ENCODE measurements at regions of chr16 and their contacts with region 1.

Region 1: DNA sequence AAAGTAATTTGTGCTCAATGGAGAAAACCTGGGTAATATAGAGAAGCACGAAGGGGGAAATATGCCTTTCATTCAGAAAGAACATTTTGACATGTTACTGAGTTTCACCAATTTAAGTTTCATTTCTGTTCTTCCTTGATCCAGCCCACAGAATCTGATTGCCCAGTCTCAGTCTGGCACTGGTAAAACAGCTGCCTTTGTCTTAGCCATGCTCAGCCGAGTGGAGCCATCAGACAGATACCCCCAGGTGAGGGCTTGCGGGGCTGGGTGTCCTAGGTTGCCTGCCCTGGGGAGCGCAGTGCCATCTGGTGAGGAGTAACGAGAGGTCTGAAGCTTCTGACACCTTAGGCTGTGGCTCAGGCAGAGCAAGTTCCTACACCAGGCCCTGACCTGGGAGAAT is 17.7 kb downstream of the DDX19A start:
- DNase-seq: no peak
- H3K4me3 ChIP-seq: no peak overlapping the region
- H3K27ac ChIP-seq: no peak overlapping the region
- H3K4me1 ChIP-seq: no peaks in the 10 kb centered on the region
- H3K27me3 ChIP-seq: no peaks in the 10 kb centered on the region
- CTCF ChIP-seq: no peak
- EP300 ChIP-seq: no peak
- POLR2A ChIP-seq: no peak

Region 2: GRCh38 chr16:70529051-70529777 is 164.8 kb after region 1 on chr16:
- in situ Hi-C with region 1: loop called in 1 of 4 experiments (anchors 25 kb)
- intact Hi-C with region 1: no loop called
- DNase-seq: no peak
- H3K4me3 ChIP-seq: no peak overlapping the region
- H3K27ac ChIP-seq: no peak overlapping the region
- H3K4me1 ChIP-seq: peaks cover 8 to 40% (median 25%) of the 10 kb centered on the region in 4 donors
- H3K27me3 ChIP-seq: no peaks in the 10 kb centered on the region
- CTCF ChIP-seq: peak; percentile 37 to 46 (median 42)
- EP300 ChIP-seq: no peak
- POLR2A ChIP-seq: no peak